Mammary epithelial cell (primary cell): ENCODE measurements at regions of chr9 and their contacts with region 1.

Region 1: GRCh38 chr9:14347406-14348122 is 33.6 kb upstream of the NFIB start:
- DNase-seq: peak; percentile 67
- H3K4me3 ChIP-seq: peak overlapping the region; percentile 45 to 52 (median 46)
- H3K27ac ChIP-seq: peak overlapping the region; percentile 6
- H3K4me1 ChIP-seq: peaks cover 69% of the 10 kb centered on the region
- H3K27me3 ChIP-seq: peaks cover 7% of the 10 kb centered on the region
- CTCF ChIP-seq: no peak

Region 2: DNA sequence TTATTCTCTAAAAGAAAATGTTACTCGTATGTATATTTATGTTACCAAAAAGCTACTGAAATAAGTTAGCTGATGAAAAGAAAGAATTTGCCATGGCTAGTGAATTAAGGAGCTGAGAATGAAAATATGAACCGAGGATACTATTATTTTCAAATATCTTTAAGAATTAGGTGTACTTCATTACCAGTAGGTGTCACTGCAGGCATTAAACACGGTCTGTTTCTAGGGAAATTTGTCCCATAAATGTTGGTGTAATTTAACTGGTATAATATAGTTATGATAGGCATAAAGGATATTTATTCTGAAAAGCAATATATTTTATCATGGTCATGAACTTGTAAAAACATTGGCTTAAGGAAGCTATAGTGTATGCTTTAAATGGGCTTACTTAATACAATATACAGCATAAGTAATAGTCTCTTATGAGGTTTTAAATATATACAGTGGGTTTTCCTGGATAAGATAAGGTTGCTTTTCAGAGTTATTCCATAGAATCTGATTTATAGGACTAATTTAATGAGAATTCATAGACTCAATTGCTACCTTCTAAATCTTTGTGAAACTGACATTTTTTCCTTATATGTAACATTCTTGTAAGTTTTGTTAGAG is 995.7 kb before region 1 on chr9:
- CTCF ChIA-PET with region 1: no interaction called
- dilution Hi-C with region 1: no loop called
- in situ Hi-C with region 1: no loop called
- intact Hi-C with region 1: loop called (anchors 2 kb)
- DNase-seq: peak; percentile 22
- H3K4me3 ChIP-seq: no peak overlapping the region
- H3K27ac ChIP-seq: no peak overlapping the region
- H3K4me1 ChIP-seq: no peaks in the 10 kb centered on the region
- H3K27me3 ChIP-seq: no peaks in the 10 kb centered on the region
- CTCF ChIP-seq: peak; percentile 56 to 66

Region 3: GRCh38 chr9:13557746-13558145 is 789.8 kb before region 1 on chr9:
- CTCF ChIA-PET with region 1: no interaction called
- dilution Hi-C with region 1: no loop called
- in situ Hi-C with region 1: no loop called
- intact Hi-C with region 1: no loop called
- DNase-seq: no peak
- H3K4me3 ChIP-seq: no peak overlapping the region
- H3K27ac ChIP-seq: no peak overlapping the region
- H3K4me1 ChIP-seq: no peaks in the 10 kb centered on the region
- H3K27me3 ChIP-seq: peaks cover 3% of the 10 kb centered on the region
- CTCF ChIP-seq: no peak

Region 4: DNA sequence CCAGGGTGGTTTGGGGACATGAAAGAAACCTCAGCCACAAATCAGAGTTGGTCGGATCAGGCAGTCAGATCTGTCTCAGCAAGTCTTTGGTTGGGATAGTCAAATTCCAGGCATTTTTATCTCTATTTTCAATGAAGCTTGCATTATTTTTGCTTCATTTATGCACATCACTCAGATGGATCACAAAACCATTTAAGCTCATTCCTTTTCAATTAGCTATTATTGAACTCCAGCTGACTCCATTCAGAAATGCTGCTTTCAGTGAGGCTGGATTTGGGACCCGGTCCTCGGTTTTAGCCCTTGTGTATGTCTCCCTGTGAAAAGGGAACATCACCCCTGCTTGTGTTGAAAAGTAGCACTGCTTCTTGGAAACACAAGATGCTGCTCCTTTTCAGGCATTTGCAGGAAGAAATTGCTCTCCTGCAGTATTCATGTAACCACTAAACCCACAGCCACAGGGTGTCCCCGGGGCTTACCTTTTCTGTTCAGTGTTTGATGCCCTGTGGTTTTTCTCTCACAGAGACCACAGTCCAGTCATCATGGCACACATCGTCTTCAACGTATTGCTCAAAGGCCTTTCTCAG is 266.5 kb before region 1 on chr9:
- CTCF ChIA-PET with region 1: no interaction called
- dilution Hi-C with region 1: no loop called
- in situ Hi-C with region 1: no loop called
- intact Hi-C with region 1: loop called (anchors 2 kb)
- DNase-seq: peak; percentile 95
- H3K4me3 ChIP-seq: no peak overlapping the region
- H3K27ac ChIP-seq: peak overlapping the region; percentile 33
- H3K4me1 ChIP-seq: peaks cover 25% of the 10 kb centered on the region
- H3K27me3 ChIP-seq: no peaks in the 10 kb centered on the region
- CTCF ChIP-seq: peak in 1 of 2 donors; percentile 16

Region 5: GRCh38 chr9:14198841-14199455 is 148.6 kb before region 1 on chr9:
- CTCF ChIA-PET with region 1: no interaction called
- dilution Hi-C with region 1: no loop called
- in situ Hi-C with region 1: no loop called
- intact Hi-C with region 1: loop called (anchors 5 kb)
- DNase-seq: peak; percentile 76
- H3K4me3 ChIP-seq: no peak overlapping the region
- H3K27ac ChIP-seq: peak overlapping the region; percentile 63
- H3K4me1 ChIP-seq: peaks cover 44% of the 10 kb centered on the region
- H3K27me3 ChIP-seq: no peaks in the 10 kb centered on the region
- CTCF ChIP-seq: no peak

Region 6: DNA sequence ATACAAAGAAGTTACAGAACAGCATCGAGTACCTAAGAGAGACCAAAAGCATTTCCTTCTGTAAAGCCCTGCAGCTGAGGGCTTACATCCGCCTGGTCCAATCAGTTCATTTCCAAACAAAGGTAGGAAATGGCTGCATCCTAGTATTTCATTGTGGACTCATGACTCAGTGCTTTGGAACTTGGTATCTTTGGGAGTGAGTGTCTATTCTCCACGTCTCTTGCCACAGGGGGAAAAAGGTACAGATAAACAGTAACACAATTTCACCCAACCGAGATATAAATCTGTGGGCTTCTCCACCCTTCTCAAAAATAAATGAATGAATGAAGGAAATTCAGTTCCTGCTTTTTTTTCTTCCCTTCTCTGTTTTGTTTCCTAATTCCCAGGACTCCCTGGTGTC is 109.0 kb before region 1 on chr9:
- CTCF ChIA-PET with region 1: no interaction called
- dilution Hi-C with region 1: no loop called
- in situ Hi-C with region 1: no loop called
- intact Hi-C with region 1: loop called (anchors 5 kb)
- DNase-seq: peak; percentile 88
- H3K4me3 ChIP-seq: no peak overlapping the region
- H3K27ac ChIP-seq: peak overlapping the region; percentile 60
- H3K4me1 ChIP-seq: peaks cover 36% of the 10 kb centered on the region
- H3K27me3 ChIP-seq: no peaks in the 10 kb centered on the region
- CTCF ChIP-seq: no peak

Region 7: DNA sequence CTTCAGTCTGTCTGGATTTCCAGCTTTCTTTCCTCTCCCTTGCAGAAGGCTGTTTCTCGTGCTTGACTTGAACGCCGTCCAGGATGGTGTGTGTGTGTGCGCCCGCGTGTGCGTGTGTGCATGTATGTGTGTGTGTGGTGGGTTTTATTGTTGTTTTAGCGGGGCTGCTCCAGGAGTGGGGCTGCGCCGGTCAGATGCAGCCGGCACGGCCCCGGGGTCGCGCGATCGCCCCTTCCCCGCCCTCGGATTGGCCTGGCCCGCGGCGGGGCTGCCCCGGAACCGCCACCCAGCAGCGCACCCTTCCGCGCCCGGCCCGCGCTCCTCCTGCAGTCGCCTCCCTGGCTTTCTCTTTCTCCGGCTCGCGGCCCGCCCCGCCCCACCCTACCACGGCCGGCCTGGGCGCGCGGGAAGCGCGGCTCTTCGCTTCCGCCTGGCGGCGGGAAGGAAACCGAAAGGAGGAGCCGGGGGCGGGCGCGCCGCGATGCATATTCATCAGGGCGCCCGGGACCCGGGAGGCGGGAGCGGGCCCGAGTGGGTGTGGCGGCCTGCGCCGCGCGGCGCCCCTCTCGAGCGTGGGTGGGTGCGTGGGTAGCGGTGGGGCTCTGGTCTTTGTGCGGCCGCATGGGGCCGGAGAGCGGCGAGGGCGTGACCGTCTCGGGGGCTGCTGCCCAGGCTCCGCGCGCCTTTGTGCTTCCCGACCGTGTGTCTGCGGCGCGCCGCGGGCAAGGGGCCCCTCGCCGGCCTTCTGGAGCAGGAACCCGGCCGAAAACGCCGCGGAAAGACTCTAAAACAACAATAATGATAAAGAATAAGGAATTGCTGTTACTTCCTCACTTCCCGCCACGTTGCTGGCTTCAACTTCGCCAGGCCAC is 25.1 kb before region 1 on chr9:
- CTCF ChIA-PET with region 1: no interaction called
- dilution Hi-C with region 1: no loop called
- in situ Hi-C with region 1: no loop called
- intact Hi-C with region 1: loop called (anchors 1 kb)
- DNase-seq: peak; percentile 92
- H3K4me3 ChIP-seq: peak overlapping the region; percentile 63 to 77 (median 65)
- H3K27ac ChIP-seq: peak overlapping the region; percentile 83
- H3K4me1 ChIP-seq: peaks cover 53% of the 10 kb centered on the region
- H3K27me3 ChIP-seq: no peaks in the 10 kb centered on the region
- CTCF ChIP-seq: peak in 1 of 2 donors; percentile 57

Region 8: GRCh38 chr9:14441976-14442651 is 94.5 kb after region 1 on chr9:
- CTCF ChIA-PET with region 1: no interaction called
- dilution Hi-C with region 1: no loop called
- in situ Hi-C with region 1: no loop called
- intact Hi-C with region 1: no loop called
- DNase-seq: no peak
- H3K4me3 ChIP-seq: no peak overlapping the region
- H3K27ac ChIP-seq: no peak overlapping the region
- H3K4me1 ChIP-seq: no peaks in the 10 kb centered on the region
- H3K27me3 ChIP-seq: peaks cover 3% of the 10 kb centered on the region
- CTCF ChIP-seq: peak; percentile 22 to 27